Prostate gland (tissue), 2 donors: ENCODE measurements at regions of chr2 and their contacts with region 1.

Region 1: GRCh38 chr2:200306196-200306930 is at the start of gene SPATS2L:
- DNase-seq: peak; percentile 83
- H3K4me3 ChIP-seq: peak within 1 kb of the TSS; percentile 90 to 91
- H3K27ac ChIP-seq: peak within 1 kb of the TSS; percentile 93 to 97
- H3K4me1 ChIP-seq: peaks cover 6% of the 10 kb centered on the region
- H3K27me3 ChIP-seq: no peaks in the 10 kb centered on the region
- CTCF ChIP-seq: no peak
- POLR2A ChIP-seq: peak; percentile 48
- total RNA-seq, gene SPATS2L: 77.4 to 88.7 TPM

Region 2: DNA sequence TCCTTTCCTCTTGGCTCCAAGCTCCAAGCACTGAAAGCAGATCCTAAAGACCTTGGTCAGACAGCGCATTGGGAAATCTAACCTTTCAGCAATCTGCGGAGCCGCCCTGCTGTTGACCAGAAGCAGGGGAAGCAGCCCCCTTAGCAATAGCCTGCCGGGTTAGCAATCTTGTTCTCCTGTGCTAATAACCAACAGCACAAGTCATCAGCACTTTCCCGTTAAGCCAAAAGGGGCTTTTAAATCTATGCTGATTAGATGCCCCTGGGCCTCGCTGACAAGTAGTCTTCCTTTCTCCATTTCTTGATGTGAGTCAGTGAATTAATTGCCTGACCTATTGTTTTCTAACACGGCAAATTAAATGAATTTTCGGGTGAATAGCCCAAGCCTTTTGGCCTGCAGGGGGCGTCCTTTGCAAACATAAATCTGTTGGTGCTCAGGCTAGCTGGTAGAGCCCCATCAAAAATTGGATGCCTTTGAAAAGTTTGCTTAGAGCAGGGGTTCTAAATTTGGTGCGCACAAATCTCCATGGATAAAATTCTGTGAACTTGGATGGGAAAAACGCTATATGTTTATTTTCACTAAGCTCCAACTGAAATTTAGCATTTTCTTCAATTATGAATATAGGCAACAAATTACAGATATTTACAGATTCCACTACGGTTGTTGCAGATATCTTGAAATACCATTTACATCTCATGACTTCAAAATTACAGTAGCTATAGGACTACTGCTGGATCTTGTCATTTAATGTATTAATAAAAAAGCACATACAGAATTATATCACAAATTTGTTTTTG is 326.3 kb before region 1 on chr2:
- intact Hi-C with region 1: loop called (anchors 5 kb)
- DNase-seq: peak; percentile 80
- H3K4me3 ChIP-seq: no peak overlapping the region
- H3K27ac ChIP-seq: no peak overlapping the region
- H3K4me1 ChIP-seq: no peaks in the 10 kb centered on the region
- H3K27me3 ChIP-seq: no peaks in the 10 kb centered on the region
- CTCF ChIP-seq: peak; percentile 81 to 93 (median 86)
- POLR2A ChIP-seq: no peak

Region 3: DNA sequence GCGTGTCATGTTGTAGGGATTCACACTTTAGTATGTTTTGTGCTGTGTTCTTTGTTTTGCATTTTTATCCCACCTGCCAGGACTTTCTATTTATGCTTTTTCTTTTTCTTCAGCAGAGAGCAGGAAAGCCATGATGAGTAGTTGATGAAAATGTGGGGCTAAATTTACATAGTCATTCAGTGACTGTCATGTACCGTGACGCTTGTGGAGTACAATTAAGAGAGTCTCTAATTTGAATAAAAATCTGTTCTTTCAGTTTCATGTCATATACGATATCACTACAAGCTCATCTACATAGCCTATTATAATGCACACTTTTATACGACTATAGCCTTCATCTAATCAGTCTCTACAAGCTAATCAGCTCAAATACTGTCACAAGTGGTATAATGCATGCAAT is 112.6 kb before region 1 on chr2:
- intact Hi-C with region 1: no loop called
- DNase-seq: no peak
- H3K4me3 ChIP-seq: no peak overlapping the region
- H3K27ac ChIP-seq: no peak overlapping the region
- H3K4me1 ChIP-seq: no peaks in the 10 kb centered on the region
- H3K27me3 ChIP-seq: no peaks in the 10 kb centered on the region
- CTCF ChIP-seq: no peak
- POLR2A ChIP-seq: no peak

Region 4: GRCh38 chr2:200376513-200377354 is 70.4 kb after region 1 on chr2:
- intact Hi-C with region 1: loop called (anchors 5 kb)
- DNase-seq: peak; percentile 44
- H3K4me3 ChIP-seq: no peak overlapping the region
- H3K27ac ChIP-seq: peak overlapping the region; percentile 75 to 78
- H3K4me1 ChIP-seq: peaks cover 17% of the 10 kb centered on the region
- H3K27me3 ChIP-seq: no peaks in the 10 kb centered on the region
- CTCF ChIP-seq: no peak
- POLR2A ChIP-seq: no peak

Region 5: DNA sequence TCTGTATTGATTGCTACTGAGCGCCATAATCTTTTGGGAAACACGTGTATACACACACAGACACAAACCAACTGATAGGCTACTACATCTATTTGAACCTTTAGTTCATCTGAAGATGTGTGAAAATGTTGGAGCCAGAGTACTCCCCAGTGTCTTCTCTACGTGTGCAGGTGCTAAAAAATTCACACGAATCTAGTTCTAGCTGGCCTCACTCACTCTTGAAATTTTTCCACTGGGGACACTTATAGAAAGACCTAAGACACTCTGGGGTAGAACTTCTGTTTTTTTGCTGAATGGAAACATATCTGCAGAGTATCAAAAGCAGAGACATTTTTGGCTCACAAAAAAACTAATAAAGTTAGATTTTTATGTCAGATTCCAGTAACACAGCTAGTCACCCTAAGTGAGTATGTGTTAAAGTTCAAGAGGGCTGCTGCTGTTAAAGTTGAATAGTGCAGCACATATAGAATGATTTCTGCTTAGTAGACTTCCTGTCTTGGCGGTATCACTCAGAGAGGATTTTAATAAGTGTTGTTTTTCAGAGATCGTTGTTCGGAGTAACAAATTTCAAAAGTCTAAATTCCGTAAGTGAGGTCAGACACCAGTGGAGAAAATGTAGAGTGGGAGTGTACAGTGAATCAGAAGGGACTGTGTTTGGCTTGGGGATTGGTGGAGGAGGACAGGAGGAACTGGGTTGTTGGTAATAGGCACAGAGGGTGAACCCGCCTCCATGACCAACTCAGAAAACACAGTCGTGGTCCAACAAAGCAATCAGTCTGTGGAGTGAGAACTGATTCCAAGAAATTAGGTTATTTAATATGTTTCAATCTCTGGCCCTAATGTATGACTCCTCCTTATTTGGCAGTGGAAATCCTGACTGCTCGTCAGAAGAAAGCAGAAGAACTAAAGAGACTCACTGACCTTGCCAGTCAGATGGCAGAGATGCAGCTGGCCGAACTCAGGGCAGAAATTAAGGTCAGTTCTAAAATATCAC is 160.4 kb after region 1 on chr2:
- intact Hi-C with region 1: loop called (anchors 5 kb)
- DNase-seq: no peak
- H3K4me3 ChIP-seq: no peak overlapping the region
- H3K27ac ChIP-seq: peak overlapping the region; percentile 43 to 49
- H3K4me1 ChIP-seq: no peaks in the 10 kb centered on the region
- H3K27me3 ChIP-seq: no peaks in the 10 kb centered on the region
- CTCF ChIP-seq: no peak
- POLR2A ChIP-seq: no peak

Region 6: GRCh38 chr2:200509612-200510433 is 203.5 kb after region 1 on chr2 and contains the start of gene KCTD18:
- intact Hi-C with region 1: no loop called
- DNase-seq: peak; percentile 84
- H3K4me3 ChIP-seq: peak within 1 kb of the TSS; percentile 70 to 83
- H3K27ac ChIP-seq: peak within 1 kb of the TSS; percentile 75 to 79
- H3K4me1 ChIP-seq: no peaks in the 10 kb centered on the region
- H3K27me3 ChIP-seq: no peaks in the 10 kb centered on the region
- CTCF ChIP-seq: peak; percentile 66 to 94 (median 82)
- POLR2A ChIP-seq: peak; percentile 80
- total RNA-seq, gene KCTD18: 21.1 to 38.2 TPM